Posterior vena cava (tissue), 2 donors: ENCODE measurements at regions of chr16 and their contacts with region 1.

Region 1: DNA sequence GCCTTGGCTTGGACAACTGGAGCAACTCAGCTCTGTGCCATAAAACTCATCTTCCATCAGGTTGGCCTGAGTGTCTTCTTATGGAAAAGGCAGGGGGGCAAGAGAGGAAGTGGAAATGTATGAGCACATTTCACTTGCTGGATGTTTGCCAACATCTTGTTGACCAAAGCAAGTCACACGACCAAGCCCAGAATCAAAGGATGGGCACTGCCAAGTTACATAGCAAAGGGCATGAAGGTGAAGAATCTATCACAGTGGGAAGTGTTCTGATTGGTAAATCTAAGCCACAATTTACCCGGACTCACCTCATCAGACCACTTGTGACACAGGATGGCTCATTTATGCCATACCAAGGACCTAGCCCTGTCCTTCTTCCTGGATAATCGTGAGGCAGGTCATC is 310.5 kb upstream of the IRX5 start:
- DNase-seq: no peak

Region 2: DNA sequence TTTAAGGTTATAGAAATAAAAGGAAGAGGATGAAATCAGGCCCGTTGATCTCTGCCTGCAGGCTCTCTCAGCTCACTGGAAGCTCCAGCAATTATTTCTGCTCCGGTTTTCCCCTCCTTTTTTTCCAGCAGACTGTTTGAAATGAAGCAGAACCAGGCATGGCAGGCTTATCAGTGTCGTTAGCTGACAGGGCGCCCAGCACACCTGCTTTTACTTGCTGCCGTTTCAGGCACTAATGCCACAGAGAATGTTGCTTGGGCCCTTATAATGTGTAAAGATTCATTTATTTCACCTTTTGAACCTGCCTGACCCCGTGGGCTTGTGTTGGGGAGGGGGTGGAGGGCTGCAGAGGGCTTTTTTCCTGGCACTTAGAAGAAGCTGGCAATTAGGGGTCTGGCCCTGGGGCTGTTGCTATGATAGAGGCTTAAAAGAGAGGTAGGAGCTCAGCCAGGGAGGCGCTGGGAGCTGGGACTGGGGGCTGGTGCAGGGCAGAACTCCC is 441.7 kb before region 1 on chr16:
- intact Hi-C with region 1: no loop called
- DNase-seq: no peak

Region 3: GRCh38 chr16:54568906-54569807 is 51.0 kb before region 1 on chr16:
- intact Hi-C with region 1: no loop called
- DNase-seq: no peak

Region 4: GRCh38 chr16:54633943-54634362 is 13.8 kb after region 1 on chr16:
- intact Hi-C with region 1: loop called in 1 of 2 experiments (anchors 1 kb)
- DNase-seq: no peak